ENCODE measurements at regions of chr21 and their contacts with region 1.

Region 1: GRCh38 chr21:31476263-31477022 is 132.4 kb upstream of the TIAM1 start:
- DNase-seq: no peak
- ATAC-seq: no peak
- H3K4me3 ChIP-seq: no peak overlapping the region
- H3K27ac ChIP-seq: no peak overlapping the region
- H3K4me1 ChIP-seq: no peaks in the 10 kb centered on the region
- H3K27me3 ChIP-seq: no peaks in the 10 kb centered on the region
- CTCF ChIP-seq: peak in 2 of 3 experiments; percentile 19 to 22; a peak in 2 of 6 replicates
- POLR2A ChIP-seq: no peak
- RAD21 ChIP-seq: no peak

Region 2: GRCh38 chr21:31457675-31458074 is 18.8 kb before region 1 on chr21:
- CTCF ChIA-PET with region 1: interaction called, 10 read pairs
- POLR2A ChIA-PET with region 1: no interaction called
- RAD21 ChIA-PET with region 1: no interaction called
- intact Hi-C with region 1: no loop called
- DNase-seq: no peak
- ATAC-seq: peak; percentile 64
- H3K4me3 ChIP-seq: no peak overlapping the region
- H3K27ac ChIP-seq: no peak overlapping the region
- H3K4me1 ChIP-seq: peaks cover 7 to 17% of the 10 kb centered on the region in 2 experiments; a peak in 2 of 4 replicates
- H3K27me3 ChIP-seq: no peaks in the 10 kb centered on the region
- CTCF ChIP-seq: peak; percentile 22 to 61 (median 53); a peak in 5 of 6 replicates
- POLR2A ChIP-seq: no peak
- RAD21 ChIP-seq: no peak; the same call in 1 of the 2 replicates

Region 3: DNA sequence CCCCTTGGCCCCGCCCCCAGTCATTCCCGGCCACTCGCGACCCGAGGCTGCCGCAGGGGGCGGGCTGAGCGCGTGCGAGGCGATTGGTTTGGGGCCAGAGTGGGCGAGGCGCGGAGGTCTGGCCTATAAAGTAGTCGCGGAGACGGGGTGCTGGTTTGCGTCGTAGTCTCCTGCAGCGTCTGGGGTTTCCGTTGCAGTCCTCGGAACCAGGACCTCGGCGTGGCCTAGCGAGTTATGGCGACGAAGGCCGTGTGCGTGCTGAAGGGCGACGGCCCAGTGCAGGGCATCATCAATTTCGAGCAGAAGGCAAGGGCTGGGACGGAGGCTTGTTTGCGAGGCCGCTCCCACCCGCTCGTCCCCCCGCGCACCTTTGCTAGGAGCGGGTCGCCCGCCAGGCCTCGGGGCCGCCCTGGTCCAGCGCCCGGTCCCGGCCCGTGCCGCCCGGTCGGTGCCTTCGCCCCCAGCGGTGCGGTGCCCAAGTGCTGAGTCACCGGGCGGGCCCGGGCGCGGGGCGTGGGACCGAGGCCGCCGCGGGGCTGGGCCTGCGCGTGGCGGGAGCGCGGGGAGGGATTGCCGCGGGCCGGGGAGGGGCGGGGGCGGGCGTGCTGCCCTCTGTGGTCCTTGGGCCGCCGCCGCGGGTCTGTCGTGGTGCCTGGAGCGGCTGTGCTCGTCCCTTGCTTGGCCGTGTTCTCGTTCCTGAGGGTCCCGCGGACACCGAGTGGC is 183.3 kb after region 1 on chr21 and contains the start of gene SOD1:
- CTCF ChIA-PET with region 1: no interaction called
- POLR2A ChIA-PET with region 1: no interaction called
- RAD21 ChIA-PET with region 1: no interaction called
- intact Hi-C with region 1: no loop called
- DNase-seq: peak; percentile 81
- ATAC-seq: peak; percentile 95
- H3K4me3 ChIP-seq: peak within 1 kb of the TSS; percentile 76 to 87
- H3K27ac ChIP-seq: peak within 1 kb of the TSS; percentile 91
- H3K4me1 ChIP-seq: peaks cover 5 to 34% of the 10 kb centered on the region in 2 experiments; a peak in 3 of 4 replicates
- H3K27me3 ChIP-seq: no peaks in the 10 kb centered on the region
- CTCF ChIP-seq: no peak
- POLR2A ChIP-seq: peak; percentile 98
- RAD21 ChIP-seq: no peak
- total RNA-seq, gene SOD1: 419 TPM

Region 4: DNA sequence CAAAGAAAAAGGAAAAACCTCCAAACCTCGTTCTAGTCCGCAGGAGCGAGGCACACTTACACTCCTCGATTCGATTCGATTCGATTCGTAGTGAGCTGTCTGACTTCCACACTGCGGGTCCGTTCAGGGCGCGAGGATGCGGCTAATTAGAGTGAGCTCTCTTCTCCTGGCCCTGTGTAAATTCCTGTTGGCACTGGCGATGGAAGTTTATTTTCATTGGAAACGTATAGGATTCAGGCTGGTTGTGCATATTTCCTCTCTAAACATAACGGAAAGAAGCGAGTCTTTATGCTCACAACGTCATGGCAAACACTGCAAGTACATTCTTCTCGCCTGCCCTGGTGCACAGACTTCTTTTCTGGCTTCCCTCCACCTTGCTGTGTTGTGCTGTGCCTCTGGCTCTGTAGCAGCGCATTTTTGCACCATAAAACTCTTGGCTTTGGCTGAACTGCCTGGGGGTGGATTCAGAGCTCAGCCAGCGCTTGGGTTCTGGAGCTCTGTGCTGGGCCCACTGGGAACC is 399.1 kb after region 1 on chr21:
- CTCF ChIA-PET with region 1: no interaction called
- POLR2A ChIA-PET with region 1: no interaction called
- RAD21 ChIA-PET with region 1: no interaction called
- intact Hi-C with region 1: no loop called
- DNase-seq: no peak
- ATAC-seq: no peak
- H3K4me3 ChIP-seq: no peak overlapping the region
- H3K27ac ChIP-seq: no peak overlapping the region
- H3K4me1 ChIP-seq: no peaks in the 10 kb centered on the region
- H3K27me3 ChIP-seq: peaks cover 42% of the 10 kb centered on the region
- CTCF ChIP-seq: no peak
- POLR2A ChIP-seq: no peak
- RAD21 ChIP-seq: no peak

Measured in HCT116 (cell line).